Activated CD4-positive, alpha-beta memory T cell treated with anti-CD3 and anti-CD28 coated beads for 36 hours (primary cell): ENCODE measurements at regions of chr16 and their contacts with region 1.

Region 1: GRCh38 chr16:12095275-12096156 is 119.0 kb downstream of the SNX29 start:
- DNase-seq: peak; percentile 74
- H3K4me3 Mint-ChIP-seq: peak overlapping the region; percentile 28
- H3K27ac Mint-ChIP-seq: no peak overlapping the region
- H3K4me1 Mint-ChIP-seq: peaks cover 4% of the 10 kb centered on the region
- H3K27me3 Mint-ChIP-seq: no peaks in the 10 kb centered on the region

Region 2: DNA sequence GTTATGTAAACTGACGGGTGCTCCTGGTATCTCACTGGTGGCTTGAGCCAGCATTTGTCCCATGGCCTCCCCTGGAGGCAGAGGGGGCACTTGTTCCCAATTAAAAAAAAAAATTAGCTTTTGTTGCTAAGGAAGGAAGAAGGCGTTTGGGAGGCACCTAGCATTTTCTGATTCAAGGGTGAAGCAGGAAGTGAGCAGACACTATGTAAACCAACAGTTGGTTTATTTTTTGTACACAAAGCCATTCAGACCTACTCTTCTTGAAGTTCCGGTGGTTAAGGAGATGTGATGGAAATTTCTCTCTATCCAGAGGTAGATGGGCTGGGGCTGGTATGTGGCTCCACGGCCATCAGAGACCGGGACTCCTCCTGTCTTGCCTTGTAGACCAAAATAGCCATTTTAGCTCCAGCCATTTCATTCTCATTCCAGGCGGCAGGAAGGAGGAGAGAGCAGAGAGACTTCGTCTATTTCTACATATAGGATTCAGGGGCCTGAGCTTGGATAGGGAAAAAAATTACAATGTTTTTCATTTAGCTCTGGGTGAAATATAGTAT is 16.0 kb before region 1 on chr16:
- CTCF ChIA-PET with region 1: interaction called, 48 read pairs
- POLR2A ChIA-PET with region 1: interaction called, 5 read pairs
- intact Hi-C with region 1: no loop called
- DNase-seq: no peak
- H3K4me3 Mint-ChIP-seq: peak overlapping the region; percentile 32
- H3K27ac Mint-ChIP-seq: peak overlapping the region; percentile 94
- H3K4me1 Mint-ChIP-seq: peaks cover 65% of the 10 kb centered on the region
- H3K27me3 Mint-ChIP-seq: no peaks in the 10 kb centered on the region

Region 3: DNA sequence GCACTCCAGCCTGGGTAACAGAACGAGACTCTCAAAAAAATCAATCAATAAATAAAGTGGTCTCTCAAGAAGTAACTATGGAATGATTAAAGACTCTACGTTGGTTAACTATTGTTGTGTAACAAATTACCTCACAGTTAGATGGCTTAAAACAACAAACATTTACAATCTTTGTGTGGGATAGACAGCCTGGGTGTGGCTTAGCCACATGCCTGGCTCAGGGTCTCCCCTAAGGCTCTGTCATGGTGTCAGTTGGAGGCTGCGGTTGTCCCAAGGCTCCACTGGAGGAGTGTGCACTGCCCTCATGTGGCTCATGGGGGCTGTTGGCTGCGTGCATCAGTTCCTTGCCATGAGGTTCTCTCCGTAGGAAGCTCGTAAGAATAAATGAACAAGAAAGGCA is 175.5 kb after region 1 on chr16:
- CTCF ChIA-PET with region 1: interaction called, 13 read pairs
- POLR2A ChIA-PET with region 1: no interaction called
- intact Hi-C with region 1: no loop called
- DNase-seq: no peak
- H3K4me3 Mint-ChIP-seq: no peak overlapping the region
- H3K27ac Mint-ChIP-seq: no peak overlapping the region
- H3K4me1 Mint-ChIP-seq: no peaks in the 10 kb centered on the region
- H3K27me3 Mint-ChIP-seq: no peaks in the 10 kb centered on the region

Region 4: GRCh38 chr16:12573730-12574383 is 478.3 kb after region 1 on chr16:
- CTCF ChIA-PET with region 1: interaction called, 12 read pairs
- POLR2A ChIA-PET with region 1: no interaction called
- intact Hi-C with region 1: no loop called
- DNase-seq: peak; percentile 84
- H3K4me3 Mint-ChIP-seq: no peak overlapping the region
- H3K27ac Mint-ChIP-seq: no peak overlapping the region
- H3K4me1 Mint-ChIP-seq: peaks cover 3% of the 10 kb centered on the region
- H3K27me3 Mint-ChIP-seq: peaks cover 2% of the 10 kb centered on the region

Region 5: GRCh38 chr16:12907670-12908233 is 812.2 kb after region 1 on chr16:
- CTCF ChIA-PET with region 1: interaction called, 10 read pairs
- POLR2A ChIA-PET with region 1: no interaction called
- intact Hi-C with region 1: no loop called
- DNase-seq: no peak
- H3K4me3 Mint-ChIP-seq: no peak overlapping the region
- H3K27ac Mint-ChIP-seq: no peak overlapping the region
- H3K4me1 Mint-ChIP-seq: no peaks in the 10 kb centered on the region
- H3K27me3 Mint-ChIP-seq: peaks cover 39% of the 10 kb centered on the region